Right ventricle myocardium inferior (tissue), 1 donor: ENCODE measurements at regions of chr11 and their contacts with region 1.

Region 1: DNA sequence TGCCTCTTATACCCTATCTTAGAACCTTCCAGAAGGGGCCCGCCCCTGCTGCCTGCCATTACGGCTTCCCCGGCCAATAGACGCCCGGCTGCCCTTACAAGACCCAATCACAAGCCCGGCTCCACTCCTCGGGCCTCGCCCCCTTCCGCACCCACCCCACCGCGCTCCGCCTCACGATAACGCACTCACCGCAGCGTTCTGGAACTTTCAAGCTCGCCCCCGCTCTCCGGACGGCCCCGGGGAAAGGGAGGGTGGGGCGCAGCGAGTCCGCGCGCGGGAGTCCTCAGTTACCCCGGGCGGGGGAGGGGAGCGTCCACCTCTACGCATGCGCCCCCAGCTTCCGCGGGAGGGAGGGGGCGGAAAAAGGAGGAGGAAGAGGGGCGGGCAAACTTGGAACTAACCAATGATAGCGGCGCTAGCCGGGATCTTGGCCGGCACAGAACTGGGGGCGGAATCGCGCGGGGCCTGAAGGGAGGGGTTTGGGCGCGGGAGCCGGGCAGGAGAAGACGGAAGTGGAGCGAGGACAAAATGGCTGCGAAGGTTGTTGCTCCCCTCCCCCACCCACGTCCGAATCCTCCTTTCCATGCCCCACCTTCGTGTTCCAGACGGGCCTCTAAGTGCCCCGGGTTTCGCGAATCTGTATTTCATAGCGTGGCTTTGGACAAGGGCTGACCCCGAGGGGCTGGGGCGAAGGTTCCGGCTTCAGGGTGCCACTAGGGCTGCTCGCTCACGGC is 389 bp upstream of the HSPA8 start:
- DNase-seq: peak; percentile 100
- ATAC-seq: peak; percentile 94

Region 2: GRCh38 chr11:123083623-123084029 is 21.3 kb after region 1 on chr11:
- intact Hi-C with region 1: loop called (anchors 1 kb)
- DNase-seq: no peak
- ATAC-seq: peak; percentile 90

Region 3: DNA sequence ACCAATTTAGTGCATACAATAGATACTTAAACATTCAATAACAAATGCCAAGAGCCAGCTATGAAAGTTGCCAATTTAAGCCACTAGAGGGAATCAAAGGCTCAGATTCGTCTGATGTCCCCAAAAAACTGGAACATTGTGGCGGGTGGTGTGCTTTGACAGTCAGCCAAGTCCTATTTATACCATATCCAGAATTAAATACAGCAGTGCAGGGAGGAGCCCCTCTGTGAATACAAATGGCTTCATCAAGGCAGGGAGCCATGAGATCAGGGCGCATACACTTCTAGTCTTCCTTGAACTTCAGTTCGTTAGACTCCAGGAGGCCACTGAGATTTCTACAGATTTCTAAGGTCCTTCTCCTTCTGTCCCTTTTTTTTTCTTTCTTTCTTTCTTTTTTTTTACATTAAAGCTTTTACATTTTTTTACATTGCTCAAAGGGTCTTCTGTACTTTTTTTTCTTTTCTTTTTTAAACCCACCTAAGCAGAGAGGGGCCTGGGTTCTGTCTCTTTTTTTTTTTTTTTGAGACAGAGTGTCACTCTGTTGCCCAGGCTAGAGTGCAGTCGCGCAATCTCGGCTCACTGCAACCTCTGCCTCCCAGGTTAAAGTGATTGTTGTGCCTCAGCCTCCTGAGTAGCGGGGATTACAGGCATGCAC is 41.1 kb after region 1 on chr11:
- intact Hi-C with region 1: loop called (anchors 5 kb)
- DNase-seq: peak; percentile 65
- ATAC-seq: peak; percentile 83